Upper lobe of right lung (tissue), 1 donor: ENCODE measurements at regions of chr9 and their contacts with region 1.

Region 1: DNA sequence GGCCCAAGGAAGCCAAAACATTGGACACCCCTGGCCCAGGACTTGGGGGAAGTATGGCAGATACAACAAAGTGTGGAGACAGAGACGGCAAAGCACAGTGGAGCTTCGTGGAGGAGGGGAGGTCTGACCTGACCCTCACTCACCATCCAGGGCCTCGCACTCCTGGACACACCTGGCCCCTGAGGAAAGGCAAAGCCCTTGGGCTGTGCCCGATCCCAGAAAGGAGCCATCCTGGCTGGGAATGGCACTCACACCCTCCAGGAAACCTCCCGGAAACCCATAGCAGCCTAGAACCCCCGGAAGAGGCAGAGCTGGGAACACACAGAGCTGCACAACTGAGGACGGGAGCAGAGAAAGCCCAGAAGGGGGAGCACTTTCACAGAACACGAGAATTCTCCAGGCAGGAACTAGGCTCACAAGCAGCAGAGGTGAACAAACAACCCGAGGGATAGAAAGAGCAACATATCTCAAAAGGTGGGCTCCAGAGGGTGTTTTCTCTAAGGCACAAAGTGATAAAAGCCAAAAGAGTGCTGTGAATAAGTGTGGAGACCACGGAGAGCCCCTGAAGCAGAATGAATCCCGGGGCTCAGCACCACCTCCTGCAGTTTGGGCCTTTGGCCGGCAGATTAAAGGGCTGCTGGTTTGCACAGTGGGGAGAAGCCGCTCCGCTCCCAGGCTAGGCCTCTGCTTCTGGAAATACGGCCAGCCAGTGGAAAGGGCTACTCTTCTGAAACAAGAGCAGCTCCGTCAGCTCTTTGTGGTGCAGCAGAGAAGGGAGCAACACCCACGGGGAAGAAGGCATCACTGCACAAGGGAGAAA is 108.2 kb downstream of the UBE2R2 start:
- DNase-seq: no peak
- ATAC-seq: peak; percentile 46
- H3K4me3 ChIP-seq: no peak overlapping the region
- H3K27ac ChIP-seq: no peak overlapping the region
- H3K4me1 ChIP-seq: peaks cover 2% of the 10 kb centered on the region
- H3K27me3 ChIP-seq: no peaks in the 10 kb centered on the region
- CTCF ChIP-seq: peak; percentile 52

Region 2: GRCh38 chr9:33778700-33779351 is 146.4 kb before region 1 on chr9:
- intact Hi-C with region 1: no loop called
- DNase-seq: no peak
- ATAC-seq: peak; percentile 93
- H3K4me3 ChIP-seq: no peak overlapping the region
- H3K27ac ChIP-seq: no peak overlapping the region
- H3K4me1 ChIP-seq: peaks cover 2% of the 10 kb centered on the region
- H3K27me3 ChIP-seq: no peaks in the 10 kb centered on the region
- CTCF ChIP-seq: peak; percentile 79

Region 3: DNA sequence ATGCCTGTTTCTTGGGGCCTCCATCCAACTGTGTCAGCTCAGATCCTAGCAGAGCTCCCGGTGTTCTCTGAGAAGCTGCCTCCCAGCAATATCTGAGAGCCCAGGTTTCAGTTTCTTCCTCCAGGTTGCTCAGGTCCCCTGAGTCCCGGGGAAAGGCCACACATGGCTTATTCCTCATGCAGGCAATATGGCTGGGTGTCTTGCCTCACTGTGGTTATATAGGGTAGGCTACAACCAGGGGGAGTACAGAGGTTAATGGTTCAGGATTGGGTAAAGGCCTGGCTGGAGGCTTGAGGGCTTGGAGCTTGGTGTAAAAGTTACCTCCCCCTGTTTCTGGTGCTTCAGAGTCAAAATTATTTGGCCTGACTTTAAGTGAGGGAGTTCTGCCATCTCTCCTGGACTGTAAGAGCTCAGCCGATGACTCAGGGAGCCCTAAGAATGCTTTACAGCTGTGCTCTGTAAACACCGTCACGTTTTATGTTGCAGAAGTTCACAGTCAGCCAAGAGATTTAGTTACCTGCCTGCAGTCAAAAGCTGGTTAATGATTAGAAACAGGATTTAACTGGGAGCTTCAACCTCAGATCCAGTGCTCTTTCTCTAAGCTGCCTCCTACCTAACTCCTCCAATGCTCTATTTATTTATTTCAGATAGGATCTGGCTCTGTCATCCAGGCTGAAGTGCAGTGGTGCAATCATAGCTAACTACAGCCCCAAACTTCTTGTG is 147.8 kb after region 1 on chr9:
- intact Hi-C with region 1: loop called (anchors 10 kb)
- DNase-seq: no peak
- ATAC-seq: peak; percentile 90
- H3K4me3 ChIP-seq: no peak overlapping the region
- H3K27ac ChIP-seq: peak overlapping the region; percentile 64
- H3K4me1 ChIP-seq: peaks cover 16% of the 10 kb centered on the region
- H3K27me3 ChIP-seq: no peaks in the 10 kb centered on the region
- CTCF ChIP-seq: no peak